ENCODE measurements at regions of chr1 and their contacts with region 1.

Region 1: DNA sequence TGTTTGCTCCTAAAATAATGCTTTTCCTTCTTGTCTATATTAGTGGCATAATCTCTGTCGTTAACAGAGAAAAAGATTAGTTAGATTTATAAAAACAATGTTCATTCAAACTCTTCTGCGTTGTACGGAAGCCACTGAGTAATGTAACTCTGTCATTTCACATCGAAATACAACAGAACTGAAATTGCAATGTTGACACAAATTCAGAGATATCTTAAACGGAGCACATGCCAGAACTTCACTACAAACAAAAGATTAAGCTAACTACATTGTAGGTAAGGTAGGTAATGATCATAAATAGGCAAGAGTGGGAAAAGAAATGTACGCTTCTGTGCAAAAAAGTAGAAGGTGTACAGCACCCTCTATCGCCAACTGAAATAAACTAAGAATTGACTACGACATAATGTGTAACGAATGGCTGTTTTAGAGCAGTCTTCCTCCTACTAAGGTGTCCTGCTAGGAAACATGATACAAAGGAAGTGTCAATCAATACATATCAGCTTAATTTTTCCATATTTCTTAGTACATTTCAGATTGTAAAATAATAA is 56.6 kb downstream of the PCNX2 start:
- DNase-seq: no peak
- CTCF ChIP-seq: no peak

Region 2: GRCh38 chr1:232630047-232630893 is 608.7 kb before region 1 on chr1 and contains the start of gene SIPA1L2:
- in situ Hi-C with region 1: loop called (anchors 10 kb)
- DNase-seq: peak; percentile 100
- CTCF ChIP-seq: peak; percentile 39

Measured in GM13977 (cell line).